ENCODE measurements at regions of chr11 and their contacts with region 1.

Region 1: DNA sequence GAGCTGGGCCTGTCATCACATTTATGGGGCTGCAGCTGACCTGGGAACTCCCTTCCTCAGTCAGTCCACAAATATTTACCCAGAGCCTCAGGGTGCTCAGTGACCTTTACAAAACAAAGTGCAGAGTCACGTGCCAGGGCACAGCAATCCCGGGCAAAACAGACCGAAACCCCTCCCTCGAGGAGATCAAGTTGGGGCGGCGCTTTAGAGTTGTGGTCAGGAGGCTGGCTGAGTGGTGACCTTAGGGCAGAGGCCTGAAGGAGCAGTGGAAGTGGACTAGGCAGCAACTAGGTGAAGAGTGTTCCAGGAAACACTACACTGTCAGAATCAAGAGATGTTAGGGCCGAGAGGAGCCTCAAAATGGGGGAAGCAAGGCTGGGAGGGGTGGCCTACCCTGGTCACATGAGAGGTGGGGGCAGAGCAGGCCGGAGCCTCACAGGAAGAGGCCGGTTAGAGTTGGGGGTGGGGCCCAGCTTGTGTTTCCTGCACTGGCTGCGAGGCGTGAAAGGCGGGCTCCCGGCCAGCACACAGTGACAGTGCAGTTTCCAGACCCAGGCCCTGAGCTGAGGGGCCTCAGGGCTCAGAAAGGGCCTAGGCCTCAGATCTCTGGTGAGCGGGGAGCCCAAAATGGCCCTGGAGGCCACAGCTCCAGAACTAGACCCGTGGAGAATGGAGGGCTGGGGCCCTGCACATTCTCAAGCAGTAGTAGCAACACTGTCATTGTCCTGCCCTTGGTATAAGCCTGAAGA is 3.7 kb upstream of the NEAT1 start:
- DNase-seq: peak; percentile 75 to 86
- H3K4me3 ChIP-seq: peak overlapping the region in 2 of 4 experiments; percentile 5 to 37; a peak in 2 of 8 replicates
- H3K27ac ChIP-seq: peak overlapping the region; percentile 87
- H3K4me1 ChIP-seq: peaks cover 21 to 66% (median 46%) of the 10 kb centered on the region in 4 experiments
- H3K27me3 ChIP-seq: no peaks in the 10 kb centered on the region; a peak in 1 of 7 replicates
- CTCF ChIP-seq: no peak
- EP300 ChIP-seq: peak; percentile 13 to 75; a peak in 2 of 3 replicates
- POLR2A ChIP-seq: no peak; a peak in 2 of 3 replicates
- RAD21 ChIP-seq: no peak; a peak in 1 of 4 replicates

Region 2: GRCh38 chr11:65078151-65078550 is 340.7 kb before region 1 on chr11:
- CTCF ChIA-PET with region 1: no interaction called
- POLR2A ChIA-PET with region 1: no interaction called
- DNase-seq: peak in 1 of 2 experiments; percentile 86
- H3K4me3 ChIP-seq: no peak overlapping the region
- H3K27ac ChIP-seq: no peak overlapping the region
- H3K4me1 ChIP-seq: peaks cover 0 to 6% (median 2%) of the 10 kb centered on the region in 4 experiments; a peak in 4 of 7 replicates
- H3K27me3 ChIP-seq: no peaks in the 10 kb centered on the region
- CTCF ChIP-seq: peak; percentile 79 to 92 (median 88)
- EP300 ChIP-seq: no peak
- POLR2A ChIP-seq: peak in 1 of 2 experiments; percentile 15; a peak in 2 of 3 replicates
- RAD21 ChIP-seq: peak; percentile 60 to 68

Region 3: DNA sequence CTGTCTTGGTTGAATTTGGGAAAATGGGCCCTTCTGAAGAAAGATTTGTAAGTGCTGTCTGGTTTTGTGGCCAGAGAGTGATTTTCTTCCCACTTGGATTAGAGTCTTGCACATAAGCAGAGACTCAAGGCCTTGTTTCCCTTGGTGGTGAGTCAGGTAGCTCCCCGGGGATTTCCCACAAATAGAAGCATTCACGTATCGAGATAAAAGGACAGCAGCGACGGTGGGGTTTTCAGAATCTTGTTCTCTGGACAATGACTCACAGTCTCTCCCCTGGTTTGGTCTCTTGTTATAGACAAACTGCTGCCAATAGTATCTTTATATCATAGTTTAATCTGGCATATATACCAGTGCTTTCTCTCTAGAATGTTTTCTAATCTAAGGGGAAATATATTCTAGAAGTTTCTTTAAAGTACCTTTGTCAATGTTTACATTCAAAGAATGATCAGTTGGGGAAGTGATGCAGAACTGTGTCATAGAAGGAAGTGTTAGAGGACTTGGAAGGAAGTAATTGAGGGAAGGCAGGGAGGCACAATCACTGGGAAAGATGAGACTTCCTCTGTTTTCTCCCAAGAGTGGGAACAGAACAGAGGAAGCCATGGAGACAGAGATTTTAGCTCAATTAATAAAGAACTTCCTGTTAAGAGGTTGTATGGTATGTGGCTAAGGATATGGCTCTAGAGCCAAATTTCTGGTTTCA is 139.0 kb before region 1 on chr11:
- CTCF ChIA-PET with region 1: no interaction called
- POLR2A ChIA-PET with region 1: no interaction called
- DNase-seq: no peak
- H3K4me3 ChIP-seq: no peak overlapping the region
- H3K27ac ChIP-seq: no peak overlapping the region
- H3K4me1 ChIP-seq: no peaks in the 10 kb centered on the region; a peak in 1 of 7 replicates
- H3K27me3 ChIP-seq: no peaks in the 10 kb centered on the region
- CTCF ChIP-seq: no peak
- EP300 ChIP-seq: no peak
- POLR2A ChIP-seq: no peak
- RAD21 ChIP-seq: no peak

Region 4: DNA sequence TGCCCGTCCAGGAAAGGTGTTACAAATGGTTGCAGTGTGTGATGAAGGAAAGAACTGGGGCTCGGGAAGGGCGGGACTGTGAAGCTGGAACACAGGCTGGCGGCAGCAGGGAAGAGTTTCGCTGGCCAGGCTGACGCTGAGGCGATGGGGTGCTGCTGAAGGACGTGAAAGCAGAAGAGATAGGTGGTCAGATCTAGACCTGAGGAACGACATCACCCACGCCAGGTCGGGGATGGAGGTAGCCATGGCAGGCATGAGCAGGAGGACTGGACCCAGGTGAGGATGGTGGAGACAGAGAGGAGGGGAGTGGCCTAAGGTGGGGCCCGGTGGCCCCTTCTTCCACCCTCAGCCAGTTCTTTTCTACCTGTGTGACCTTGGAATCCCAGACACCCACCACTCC is 95.1 kb before region 1 on chr11:
- CTCF ChIA-PET with region 1: no interaction called
- POLR2A ChIA-PET with region 1: no interaction called
- DNase-seq: no peak
- H3K4me3 ChIP-seq: no peak overlapping the region
- H3K27ac ChIP-seq: no peak overlapping the region
- H3K4me1 ChIP-seq: no peaks in the 10 kb centered on the region; a peak in 2 of 7 replicates
- H3K27me3 ChIP-seq: no peaks in the 10 kb centered on the region
- CTCF ChIP-seq: no peak
- EP300 ChIP-seq: no peak
- POLR2A ChIP-seq: no peak
- RAD21 ChIP-seq: no peak

Region 5: GRCh38 chr11:65382033-65382807 is 36.7 kb before region 1 on chr11 and contains the start of gene SLC25A45:
- CTCF ChIA-PET with region 1: interaction called, 57 read pairs
- POLR2A ChIA-PET with region 1: interaction called, 14 read pairs
- DNase-seq: peak in 1 of 2 experiments; percentile 80
- H3K4me3 ChIP-seq: peak within 1 kb of the TSS in 1 of 4 experiments; percentile 8; a peak in 2 of 8 replicates
- H3K27ac ChIP-seq: no peak within 1 kb of the TSS; the same call in 1 of the 2 replicates
- H3K4me1 ChIP-seq: peaks cover 0 to 12% (median 11%) of the 10 kb centered on the region in 4 experiments; a peak in 5 of 7 replicates
- H3K27me3 ChIP-seq: 0 out of 7 replicates have a peak, but pooled peaks cover 0 to 2% (median 0%) of the 10 kb centered on the region in 4 experiments
- CTCF ChIP-seq: peak; percentile 23 to 50 (median 46)
- EP300 ChIP-seq: no peak
- POLR2A ChIP-seq: 0 out of 3 replicates have a peak, but pooled peaks of 1 of the 2 experiments have one; percentile 19
- RAD21 ChIP-seq: peak; percentile 49 to 55
- total RNA-seq, gene SLC25A45: 0.54 and 0.61 TPM in 2 replicates

Region 6: GRCh38 chr11:65403607-65404121 is 15.2 kb before region 1 on chr11:
- CTCF ChIA-PET with region 1: interaction called, 69 read pairs
- POLR2A ChIA-PET with region 1: interaction called, 15 read pairs
- DNase-seq: no peak
- H3K4me3 ChIP-seq: no peak overlapping the region
- H3K27ac ChIP-seq: no peak overlapping the region
- H3K4me1 ChIP-seq: no peaks in the 10 kb centered on the region; a peak in 1 of 7 replicates
- H3K27me3 ChIP-seq: no peaks in the 10 kb centered on the region
- CTCF ChIP-seq: no peak
- EP300 ChIP-seq: no peak
- POLR2A ChIP-seq: no peak
- RAD21 ChIP-seq: no peak

Region 7: DNA sequence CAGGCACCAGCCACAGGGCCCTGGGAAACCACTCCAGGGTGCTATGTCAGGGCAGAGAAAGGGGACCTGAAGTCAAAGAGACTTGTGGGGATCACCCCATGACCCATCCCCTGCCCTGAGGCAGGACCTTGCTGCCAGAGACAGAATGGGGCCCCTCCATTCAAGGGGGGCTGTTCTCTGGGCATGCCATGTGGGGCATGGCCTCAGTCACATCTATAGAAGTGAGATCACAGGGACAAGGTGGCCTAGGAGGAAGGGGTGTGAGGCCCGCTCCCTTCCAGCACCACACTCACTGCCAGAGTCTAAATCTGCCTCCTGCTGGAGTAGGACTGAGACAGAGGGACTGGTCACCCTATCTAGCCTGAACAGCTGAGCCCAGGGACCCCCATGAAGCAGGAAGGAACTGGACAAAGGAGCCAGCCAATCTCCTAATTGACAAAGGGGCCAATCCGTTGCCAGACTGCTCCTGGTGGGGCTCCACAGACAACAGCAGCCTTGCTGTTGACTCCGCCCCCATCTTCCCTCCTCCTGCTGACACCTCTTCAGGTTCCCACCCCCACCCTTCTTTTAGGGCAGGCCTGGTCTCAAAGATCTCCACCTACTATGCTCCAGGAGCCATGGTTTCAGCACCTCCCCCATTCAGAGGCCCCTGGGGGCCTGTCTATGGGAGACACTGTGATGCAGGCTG is 29.7 kb after region 1 on chr11:
- CTCF ChIA-PET with region 1: interaction called, 42 read pairs
- POLR2A ChIA-PET with region 1: interaction called, 79 read pairs
- DNase-seq: no peak
- H3K4me3 ChIP-seq: no peak overlapping the region
- H3K27ac ChIP-seq: no peak overlapping the region
- H3K4me1 ChIP-seq: no peaks in the 10 kb centered on the region; a peak in 4 of 7 replicates
- H3K27me3 ChIP-seq: no peaks in the 10 kb centered on the region; a peak in 2 of 7 replicates
- CTCF ChIP-seq: no peak
- EP300 ChIP-seq: no peak
- POLR2A ChIP-seq: no peak
- RAD21 ChIP-seq: no peak

Region 8: GRCh38 chr11:65477149-65477965 is 58.5 kb after region 1 on chr11:
- CTCF ChIA-PET with region 1: interaction called, 430 read pairs
- POLR2A ChIA-PET with region 1: interaction called, 75 read pairs
- DNase-seq: peak in 1 of 2 experiments; percentile 91
- H3K4me3 ChIP-seq: peak overlapping the region; percentile 60 to 86 (median 74)
- H3K27ac ChIP-seq: peak overlapping the region; percentile 90
- H3K4me1 ChIP-seq: peaks cover 0 to 20% (median 16%) of the 10 kb centered on the region in 4 experiments; a peak in 5 of 7 replicates
- H3K27me3 ChIP-seq: no peaks in the 10 kb centered on the region
- CTCF ChIP-seq: no peak
- EP300 ChIP-seq: no peak
- POLR2A ChIP-seq: peak; percentile 70 to 88
- RAD21 ChIP-seq: no peak

Measured in H1 (cell line).